GM12878 (cell line): ENCODE measurements at regions of chr2 and their contacts with region 1.

Region 1: GRCh38 chr2:101679037-101679726 is 18.3 kb upstream of the MAP4K4 start:
- DNase-seq: no peak
- ATAC-seq: no peak
- H3K4me3 ChIP-seq: no peak overlapping the region
- H3K27ac ChIP-seq: no peak overlapping the region
- H3K4me1 ChIP-seq: no peaks in the 10 kb centered on the region
- H3K27me3 ChIP-seq: no peaks in the 10 kb centered on the region; a peak in 1 of 4 replicates
- CTCF ChIP-seq: no peak
- EP300 ChIP-seq: no peak
- POLR2A ChIP-seq: no peak
- RAD21 ChIP-seq: no peak

Region 2: GRCh38 chr2:101623031-101623521 is 56.1 kb before region 1 on chr2:
- CTCF ChIA-PET with region 1: no interaction called
- POLR2A ChIA-PET with region 1: interaction called, 3 read pairs
- RAD21 ChIA-PET with region 1: interaction called, 6 read pairs
- SMC1A ChIA-PET with region 1: interaction called, 13 read pairs
- in situ Hi-C with region 1: no loop called
- intact Hi-C with region 1: loop called (anchors 2 kb)
- DNase-seq: peak; percentile 50
- ATAC-seq: peak; percentile 86
- H3K4me3 ChIP-seq: no peak overlapping the region; the same call in 1 of the 2 replicates
- H3K27ac ChIP-seq: peak overlapping the region; percentile 41; the same call in 1 of the 2 replicates
- H3K4me1 ChIP-seq: peaks cover 22% of the 10 kb centered on the region
- H3K27me3 ChIP-seq: no peaks in the 10 kb centered on the region
- CTCF ChIP-seq: no peak
- EP300 ChIP-seq: peak; percentile 74 to 84; a peak in 3 of 4 replicates
- POLR2A ChIP-seq: no peak
- RAD21 ChIP-seq: no peak

Region 3: DNA sequence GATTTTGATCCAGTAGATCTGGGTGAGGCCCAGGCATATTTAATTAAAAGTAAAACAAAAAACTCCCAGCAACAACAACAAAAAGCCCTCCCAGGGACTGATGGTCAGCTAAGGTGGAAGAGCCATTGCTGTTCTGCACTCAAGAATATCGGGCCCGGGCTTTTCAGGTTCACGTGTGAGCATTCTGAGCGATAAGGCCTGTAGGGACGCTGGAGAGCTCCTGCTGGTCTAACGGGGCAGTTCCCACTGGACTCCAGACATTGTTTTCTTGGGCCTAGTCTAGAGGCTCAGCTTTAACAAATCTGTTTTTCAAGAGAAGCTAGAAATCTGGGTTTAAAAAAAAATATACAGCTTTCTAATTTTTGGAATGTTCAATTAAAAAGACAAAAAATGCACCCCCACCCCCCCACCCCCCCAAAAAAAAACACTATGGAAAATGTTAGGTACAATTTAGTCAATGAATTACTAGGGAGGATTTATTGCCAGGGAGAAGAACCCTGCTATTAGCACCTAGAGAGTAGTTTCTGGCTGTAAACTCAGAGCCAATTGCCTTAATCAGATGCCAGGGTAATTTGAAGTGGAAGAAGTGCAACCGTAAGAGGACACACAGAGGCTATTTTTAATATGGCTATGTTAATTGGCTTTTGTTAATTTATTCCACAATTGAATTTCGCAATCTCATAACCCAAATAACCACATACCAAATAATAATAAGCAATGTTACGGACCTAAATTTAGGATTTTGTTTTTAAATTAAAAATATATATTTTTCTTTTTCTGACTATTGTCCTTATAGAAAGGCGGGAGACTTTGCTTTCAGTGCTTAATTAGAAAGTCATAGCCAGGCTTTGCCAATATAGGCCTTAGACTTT is 97.2 kb after region 1 on chr2:
- CTCF ChIA-PET with region 1: no interaction called
- POLR2A ChIA-PET with region 1: no interaction called
- RAD21 ChIA-PET with region 1: no interaction called
- SMC1A ChIA-PET with region 1: no interaction called
- in situ Hi-C with region 1: no loop called
- intact Hi-C with region 1: no loop called
- DNase-seq: no peak
- ATAC-seq: no peak
- H3K4me3 ChIP-seq: no peak overlapping the region
- H3K27ac ChIP-seq: no peak overlapping the region
- H3K4me1 ChIP-seq: no peaks in the 10 kb centered on the region
- H3K27me3 ChIP-seq: peaks cover 0 to 4% of the 10 kb centered on the region in 2 experiments; a peak in 1 of 4 replicates
- CTCF ChIP-seq: no peak
- EP300 ChIP-seq: no peak
- POLR2A ChIP-seq: no peak
- RAD21 ChIP-seq: no peak